ENCODE measurements at regions of chr6 and their contacts with region 1.

Region 1: DNA sequence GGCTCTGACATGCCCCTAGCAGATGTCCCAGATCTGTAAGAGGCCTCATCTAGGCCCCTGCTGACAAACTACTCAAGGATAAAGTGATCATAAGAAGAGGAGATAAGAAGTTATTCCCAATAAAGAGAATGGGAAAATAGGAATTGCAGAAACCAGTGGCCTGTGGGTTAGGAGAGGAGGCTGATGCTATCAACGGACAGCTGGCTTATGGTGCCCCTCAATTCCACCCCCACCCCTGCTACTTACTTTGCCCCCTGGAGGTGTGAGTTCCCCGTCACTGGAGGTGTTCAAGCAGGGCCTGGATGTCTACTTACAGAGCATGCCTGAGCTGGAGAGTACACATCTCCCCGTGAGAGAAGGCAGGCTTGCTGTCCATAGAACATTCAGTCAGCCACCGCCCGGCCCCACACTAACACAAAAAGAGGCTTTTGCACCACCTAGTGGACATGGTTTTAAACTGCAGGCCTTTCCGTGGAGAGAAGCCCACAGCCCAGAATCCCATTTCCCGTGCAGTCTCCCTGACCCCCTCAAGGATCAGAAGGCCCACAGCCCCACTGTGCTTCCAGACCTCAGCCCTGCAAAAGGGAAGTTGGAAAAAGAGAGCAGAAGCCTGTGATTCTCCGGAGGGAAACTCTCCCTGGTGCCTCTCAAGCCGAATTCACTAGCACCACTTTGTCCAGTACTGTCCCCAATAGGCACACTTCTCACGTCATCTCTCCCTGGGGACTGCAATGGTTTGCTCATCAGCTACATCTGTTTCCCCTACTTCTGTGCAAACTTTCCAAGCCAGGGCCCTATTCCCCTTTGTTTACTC is 23.8 kb upstream of the BNIP5 start:
- DNase-seq: peak; percentile 79 to 92 (median 85)
- ATAC-seq: peak; percentile 91 to 92
- H3K4me3 ChIP-seq: no peak overlapping the region
- H3K27ac ChIP-seq: no peak overlapping the region
- H3K4me1 ChIP-seq: peaks cover 3% of the 10 kb centered on the region
- H3K27me3 ChIP-seq: no peaks in the 10 kb centered on the region

Region 2: DNA sequence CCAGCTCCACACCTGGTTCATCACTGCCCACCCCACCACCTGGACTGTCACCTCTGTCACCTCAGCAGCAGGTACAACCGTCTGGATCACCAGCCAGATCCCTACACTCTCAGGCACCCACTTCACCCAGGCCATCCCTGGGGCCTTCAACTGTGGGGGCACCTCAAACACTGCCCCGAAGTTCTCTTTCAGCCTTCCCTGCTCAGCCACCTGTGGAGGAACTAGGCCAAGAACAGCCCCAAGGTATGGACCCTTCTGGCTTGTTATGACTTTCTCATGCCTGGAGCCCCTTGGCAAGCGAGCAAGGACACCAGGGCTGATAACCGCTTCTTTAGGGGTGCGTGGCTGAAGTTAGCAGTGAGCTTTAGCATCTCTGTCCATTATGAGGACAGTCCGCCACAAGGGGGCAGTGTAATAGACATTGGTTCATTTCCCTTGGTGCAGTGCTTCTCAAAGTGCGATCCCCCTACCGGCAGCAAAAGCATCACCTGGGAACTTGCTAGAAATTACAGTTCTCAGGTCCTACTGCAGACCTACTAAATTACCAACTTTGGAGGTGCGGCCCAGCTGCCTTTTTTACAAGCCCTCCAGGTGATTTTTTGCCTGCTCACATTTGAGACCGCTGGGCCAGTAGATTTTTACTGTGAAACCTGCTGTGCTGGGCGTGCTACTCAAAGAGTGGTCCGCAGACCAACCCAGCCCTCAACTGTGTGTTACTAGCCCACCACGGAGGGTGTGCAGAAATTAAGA is 58.0 kb before region 1 on chr6:
- intact Hi-C with region 1: loop called (anchors 1 to 10 kb)
- DNase-seq: peak; percentile 79 to 93 (median 86)
- ATAC-seq: peak; percentile 84 to 86
- H3K4me3 ChIP-seq: no peak overlapping the region
- H3K27ac ChIP-seq: no peak overlapping the region
- H3K4me1 ChIP-seq: no peaks in the 10 kb centered on the region
- H3K27me3 ChIP-seq: no peaks in the 10 kb centered on the region

Region 3: GRCh38 chr6:36340618-36341454 is 19.6 kb before region 1 on chr6:
- intact Hi-C with region 1: loop called in 1 of 4 experiments (anchors 2 kb)
- DNase-seq: peak; percentile 80 to 94 (median 92)
- ATAC-seq: peak; percentile 71 to 81
- H3K4me3 ChIP-seq: no peak overlapping the region
- H3K27ac ChIP-seq: no peak overlapping the region
- H3K4me1 ChIP-seq: no peaks in the 10 kb centered on the region
- H3K27me3 ChIP-seq: no peaks in the 10 kb centered on the region

Measured in right cardiac atrium (tissue), 5 donors.